Activated B cell treated with CpG ODN at 0.5 μM for 24 hours (primary cell): ENCODE measurements at regions of chr4 and their contacts with region 1.

Region 1: GRCh38 chr4:40056716-40057585 is at the start of gene N4BP2:
- DNase-seq: peak; percentile 75
- ATAC-seq: peak; percentile 68
- H3K4me3 Mint-ChIP-seq: peak within 1 kb of the TSS; percentile 95
- H3K27ac Mint-ChIP-seq: peak within 1 kb of the TSS; percentile 92
- H3K4me1 Mint-ChIP-seq: peaks cover 27% of the 10 kb centered on the region
- H3K27me3 Mint-ChIP-seq: no peaks in the 10 kb centered on the region
- CTCF ChIP-seq: no peak
- total RNA-seq, gene N4BP2: 6.0 and 6.2 TPM in 2 replicates

Region 2: DNA sequence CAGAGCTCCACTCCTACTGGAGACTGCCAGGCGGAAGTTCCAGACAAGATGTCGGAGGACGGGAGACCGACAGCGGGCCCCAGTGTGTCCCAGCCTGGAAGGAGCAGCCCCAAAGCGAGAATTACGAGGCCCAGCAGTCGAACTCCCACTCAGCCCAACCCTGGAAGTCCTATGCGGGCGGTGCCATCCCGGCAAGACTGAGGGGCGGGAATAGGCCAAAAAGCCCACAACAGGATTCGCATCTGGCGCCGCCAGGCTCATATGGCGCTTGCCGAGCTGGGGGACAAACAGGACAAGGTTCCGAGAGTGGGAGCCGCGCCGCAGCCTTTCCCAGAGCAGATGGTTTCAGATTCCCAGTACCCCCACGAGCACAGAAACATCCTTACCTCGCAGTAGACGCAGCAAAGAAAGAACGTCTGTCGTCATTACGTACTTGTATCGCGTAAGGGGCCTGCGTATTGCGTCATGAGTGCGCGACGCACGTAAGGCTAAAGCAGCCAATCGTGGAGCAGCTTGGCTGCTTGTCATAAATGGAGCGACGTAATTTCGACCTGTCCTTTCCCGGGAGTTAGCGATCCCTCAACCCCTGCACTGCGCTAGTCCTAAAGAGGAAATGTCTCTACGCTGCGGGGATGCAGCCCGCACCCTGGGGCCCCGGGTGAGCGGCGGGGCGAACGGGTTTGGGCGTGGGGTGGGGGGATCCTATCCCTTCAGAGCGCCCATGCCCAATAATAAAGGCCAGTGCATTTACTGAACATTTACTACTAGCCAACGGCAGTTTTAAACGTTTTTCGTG is 598.2 kb before region 1 on chr4 and contains the starts of genes LIAS and RPL9:
- CTCF ChIA-PET with region 1: no interaction called
- POLR2A ChIA-PET with region 1: interaction called, 3 read pairs
- intact Hi-C with region 1: loop called (anchors 5 kb)
- DNase-seq: peak; percentile 90
- ATAC-seq: peak; percentile 81
- H3K4me3 Mint-ChIP-seq: peak within 1 kb of the TSS; percentile 97
- H3K27ac Mint-ChIP-seq: peak within 1 kb of the TSS; percentile 98
- H3K4me1 Mint-ChIP-seq: peaks cover 36% of the 10 kb centered on the region
- H3K27me3 Mint-ChIP-seq: no peaks in the 10 kb centered on the region
- CTCF ChIP-seq: no peak
- total RNA-seq, gene LIAS: 19.5 and 20.5 TPM in 2 replicates
- total RNA-seq, gene RPL9: 2,632 and 2,865 TPM in 2 replicates

Region 3: DNA sequence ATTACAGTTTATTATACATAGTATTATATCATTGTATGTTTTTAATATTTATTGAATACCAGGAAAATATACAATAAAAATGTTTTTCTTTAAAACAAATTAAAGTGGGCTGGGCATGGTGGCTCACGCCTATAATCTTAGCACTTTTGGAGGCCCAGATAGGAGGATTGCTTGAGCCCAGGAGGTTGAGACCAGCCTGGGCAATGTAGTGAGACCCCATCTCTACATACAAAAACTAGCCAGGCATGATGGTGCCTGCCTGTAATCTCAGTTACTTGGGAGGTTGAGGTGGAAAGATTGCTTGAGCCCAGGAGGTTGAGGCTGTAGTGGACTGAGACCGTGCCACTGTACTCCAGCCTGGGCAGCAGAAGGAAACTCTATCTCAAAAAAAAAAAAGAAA is 40.9 kb before region 1 on chr4:
- CTCF ChIA-PET with region 1: no interaction called
- POLR2A ChIA-PET with region 1: no interaction called
- intact Hi-C with region 1: no loop called
- DNase-seq: no peak
- ATAC-seq: no peak
- H3K4me3 Mint-ChIP-seq: no peak overlapping the region
- H3K27ac Mint-ChIP-seq: no peak overlapping the region
- H3K4me1 Mint-ChIP-seq: no peaks in the 10 kb centered on the region
- H3K27me3 Mint-ChIP-seq: no peaks in the 10 kb centered on the region
- CTCF ChIP-seq: no peak

Region 4: DNA sequence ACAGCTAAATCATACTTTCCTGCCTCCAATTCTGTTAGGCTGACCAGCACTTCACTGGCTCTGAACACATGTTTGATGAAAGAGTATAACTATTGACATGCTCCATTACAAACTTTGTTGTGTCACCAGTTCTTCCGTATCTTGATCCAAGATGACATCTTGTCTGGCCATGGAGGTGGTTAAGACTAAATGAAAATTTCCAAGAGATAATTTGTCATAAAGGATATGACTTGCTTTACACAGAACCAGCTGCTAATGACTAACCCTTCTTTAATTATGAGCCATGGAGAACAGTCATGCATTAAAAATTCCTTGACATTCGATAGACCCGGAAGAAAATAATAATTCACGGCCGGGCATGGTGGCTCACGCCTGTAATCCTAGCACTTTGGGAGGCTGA is 18.0 kb before region 1 on chr4:
- CTCF ChIA-PET with region 1: no interaction called
- POLR2A ChIA-PET with region 1: no interaction called
- intact Hi-C with region 1: no loop called
- DNase-seq: no peak
- ATAC-seq: no peak
- H3K4me3 Mint-ChIP-seq: no peak overlapping the region
- H3K27ac Mint-ChIP-seq: no peak overlapping the region
- H3K4me1 Mint-ChIP-seq: no peaks in the 10 kb centered on the region
- H3K27me3 Mint-ChIP-seq: no peaks in the 10 kb centered on the region
- CTCF ChIP-seq: no peak

Region 5: DNA sequence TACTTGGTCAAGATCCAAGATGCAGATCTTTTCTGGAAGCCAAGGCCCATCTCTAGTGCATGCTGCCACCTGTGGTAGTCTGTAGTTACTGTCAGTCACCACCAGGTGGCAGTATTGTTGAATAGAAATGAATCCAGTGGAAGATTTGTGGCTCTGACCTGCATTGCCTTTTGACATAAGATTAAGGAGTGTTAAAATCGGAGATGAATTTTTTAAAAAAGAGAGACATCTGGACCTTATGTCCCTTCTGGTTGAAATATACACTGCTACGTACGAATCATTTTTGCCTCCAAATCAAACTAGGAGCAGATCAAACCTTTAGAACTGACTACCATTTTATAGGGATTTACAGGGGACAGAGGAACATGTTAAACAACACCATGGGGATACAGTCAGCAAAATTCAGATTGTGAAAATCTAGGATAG is 93.0 kb after region 1 on chr4:
- CTCF ChIA-PET with region 1: interaction called, 7 read pairs
- POLR2A ChIA-PET with region 1: interaction called, 6 read pairs
- intact Hi-C with region 1: loop called (anchors 1 kb)
- DNase-seq: no peak
- ATAC-seq: peak; percentile 97
- H3K4me3 Mint-ChIP-seq: no peak overlapping the region
- H3K27ac Mint-ChIP-seq: peak overlapping the region; percentile 59
- H3K4me1 Mint-ChIP-seq: peaks cover 38% of the 10 kb centered on the region
- H3K27me3 Mint-ChIP-seq: no peaks in the 10 kb centered on the region
- CTCF ChIP-seq: peak; percentile 57

Region 6: DNA sequence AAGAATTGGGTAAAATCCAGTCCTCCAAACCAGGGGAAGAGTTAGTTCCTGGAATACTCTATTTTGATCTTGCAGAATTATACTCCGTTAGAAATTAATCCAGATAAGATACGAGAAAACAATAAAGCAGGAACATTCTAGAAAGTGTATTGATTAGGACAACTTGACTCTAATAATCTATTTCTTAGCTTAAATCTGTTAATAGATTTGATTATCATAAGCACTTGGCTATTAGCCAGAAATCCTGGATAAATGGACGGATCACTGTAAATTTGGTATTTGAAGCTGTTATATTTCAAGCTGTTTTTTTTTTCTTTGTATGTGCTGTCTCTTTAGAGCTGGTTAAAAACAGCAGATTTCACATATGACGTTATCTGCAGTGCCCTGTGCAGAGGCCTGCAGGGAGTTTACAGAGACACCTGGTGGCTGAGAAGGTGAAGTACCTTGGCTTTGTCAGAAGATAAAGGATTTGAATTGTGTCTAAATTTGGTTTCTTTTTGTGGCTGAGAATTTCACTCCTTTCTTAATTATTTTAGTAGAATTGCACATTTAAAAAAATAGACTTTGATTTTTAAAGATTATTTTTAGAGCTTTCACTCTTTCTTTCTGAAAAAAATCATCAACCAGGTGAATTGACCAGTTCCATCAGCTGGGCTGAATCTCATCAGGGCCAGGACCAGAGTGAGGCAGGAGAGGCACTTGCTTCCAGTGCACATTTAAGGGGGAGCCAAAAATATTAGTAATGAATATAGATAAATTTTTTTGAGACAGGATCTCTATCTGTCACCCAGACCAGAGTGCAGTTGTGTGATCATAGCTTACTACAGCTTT is 268.5 kb after region 1 on chr4:
- CTCF ChIA-PET with region 1: interaction called, 54 read pairs
- POLR2A ChIA-PET with region 1: interaction called, 9 read pairs
- intact Hi-C with region 1: loop called (anchors 1 kb)
- DNase-seq: no peak
- ATAC-seq: peak; percentile 100
- H3K4me3 Mint-ChIP-seq: no peak overlapping the region
- H3K27ac Mint-ChIP-seq: no peak overlapping the region
- H3K4me1 Mint-ChIP-seq: peaks cover 14% of the 10 kb centered on the region
- H3K27me3 Mint-ChIP-seq: peaks cover 5% of the 10 kb centered on the region
- CTCF ChIP-seq: no peak

Region 7: DNA sequence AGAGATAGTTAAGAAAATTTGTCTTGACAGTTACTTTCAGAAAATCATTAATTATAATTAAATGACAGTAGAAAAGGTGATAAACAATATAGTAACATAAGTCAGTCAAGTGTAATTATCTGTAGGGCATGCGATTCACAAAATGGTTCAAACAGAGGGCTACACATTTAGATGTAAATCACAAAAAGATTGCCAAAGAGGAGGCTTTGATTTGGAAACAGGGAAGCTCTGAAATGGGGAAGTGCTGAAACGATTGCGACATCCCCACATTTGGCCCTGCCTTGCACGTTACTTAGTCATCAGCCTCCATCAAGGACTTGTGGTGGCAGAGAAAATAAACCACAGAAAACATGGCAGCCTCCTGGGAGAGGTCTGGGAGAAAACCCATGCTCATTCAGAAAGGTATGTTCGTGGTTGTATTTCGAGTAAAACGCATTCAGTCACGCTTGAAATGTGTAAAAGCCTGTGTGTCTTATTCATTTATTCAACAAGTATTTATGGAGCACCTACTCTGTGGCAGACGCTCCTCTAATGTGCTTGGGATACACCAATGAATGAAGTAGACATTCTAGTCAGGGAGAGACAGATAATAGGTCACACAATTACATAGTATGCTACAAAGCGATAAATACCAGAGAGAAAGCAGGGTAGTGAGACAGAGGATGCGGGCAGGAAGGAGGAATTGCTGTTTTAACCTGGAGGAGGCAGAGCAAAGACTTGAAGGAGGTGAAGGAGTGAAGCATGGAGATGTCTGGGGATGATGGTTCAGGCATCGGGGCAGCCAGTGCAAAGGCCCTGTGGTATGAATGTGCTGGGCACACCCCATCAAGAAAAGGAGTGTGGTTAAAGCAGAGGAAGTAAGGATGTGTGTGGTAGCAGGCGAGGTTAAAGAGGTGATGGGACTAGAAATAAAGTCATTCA is 564.9 kb after region 1 on chr4:
- CTCF ChIA-PET with region 1: no interaction called
- POLR2A ChIA-PET with region 1: no interaction called
- intact Hi-C with region 1: loop called (anchors 5 kb)
- DNase-seq: peak; percentile 18
- ATAC-seq: peak; percentile 93
- H3K4me3 Mint-ChIP-seq: peak overlapping the region; percentile 39
- H3K27ac Mint-ChIP-seq: peak overlapping the region; percentile 54
- H3K4me1 Mint-ChIP-seq: peaks cover 23% of the 10 kb centered on the region
- H3K27me3 Mint-ChIP-seq: no peaks in the 10 kb centered on the region
- CTCF ChIP-seq: no peak

Region 8: DNA sequence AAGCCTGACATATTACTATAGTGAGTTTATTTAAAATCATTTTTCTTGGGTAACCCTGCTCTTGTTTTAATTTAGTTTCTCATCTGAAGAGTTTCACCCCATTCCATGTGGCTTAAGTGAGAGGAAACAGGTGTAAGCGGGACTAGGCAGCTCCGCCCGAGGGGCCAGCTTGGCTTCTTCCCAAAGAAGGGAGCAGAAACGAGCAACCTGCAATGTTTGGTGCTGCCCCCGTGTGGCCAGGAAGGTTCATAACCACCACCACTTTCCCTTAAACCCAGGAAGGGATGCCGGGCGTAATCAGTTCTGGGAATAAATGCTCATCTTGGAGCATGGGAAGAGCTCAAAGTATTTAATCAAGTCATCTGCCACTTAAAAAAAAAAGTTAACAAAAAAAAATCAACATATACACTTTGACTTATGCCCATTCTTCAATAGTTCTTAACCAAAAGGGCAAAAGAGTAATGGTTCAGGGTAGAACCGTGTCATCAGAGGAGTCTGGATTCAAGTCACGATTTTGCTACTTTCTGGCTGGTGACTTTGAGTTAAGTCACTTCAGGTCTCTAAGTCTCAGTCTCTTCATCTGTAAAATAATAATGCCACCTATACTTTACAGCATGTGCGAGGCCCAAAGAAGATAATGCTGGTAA is 840.7 kb after region 1 on chr4:
- CTCF ChIA-PET with region 1: no interaction called
- POLR2A ChIA-PET with region 1: no interaction called
- intact Hi-C with region 1: loop called (anchors 1 kb)
- DNase-seq: peak; percentile 54
- ATAC-seq: peak; percentile 67
- H3K4me3 Mint-ChIP-seq: peak overlapping the region; percentile 69
- H3K27ac Mint-ChIP-seq: no peak overlapping the region
- H3K4me1 Mint-ChIP-seq: peaks cover 8% of the 10 kb centered on the region
- H3K27me3 Mint-ChIP-seq: peaks cover 2% of the 10 kb centered on the region
- CTCF ChIP-seq: peak; percentile 37